PC-9 (cell line): ENCODE measurements at regions of chr22 and their contacts with region 1.

Region 1: GRCh38 chr22:33519071-33519973 is 401.0 kb downstream of the LARGE1 start:
- DNase-seq: peak; percentile 9 to 38
- H3K4me3 ChIP-seq: no peak overlapping the region
- H3K27ac ChIP-seq: no peak overlapping the region
- H3K4me1 ChIP-seq: no peaks in the 10 kb centered on the region
- H3K27me3 ChIP-seq: no peaks in the 10 kb centered on the region
- CTCF ChIP-seq: peak; percentile 78

Region 2: DNA sequence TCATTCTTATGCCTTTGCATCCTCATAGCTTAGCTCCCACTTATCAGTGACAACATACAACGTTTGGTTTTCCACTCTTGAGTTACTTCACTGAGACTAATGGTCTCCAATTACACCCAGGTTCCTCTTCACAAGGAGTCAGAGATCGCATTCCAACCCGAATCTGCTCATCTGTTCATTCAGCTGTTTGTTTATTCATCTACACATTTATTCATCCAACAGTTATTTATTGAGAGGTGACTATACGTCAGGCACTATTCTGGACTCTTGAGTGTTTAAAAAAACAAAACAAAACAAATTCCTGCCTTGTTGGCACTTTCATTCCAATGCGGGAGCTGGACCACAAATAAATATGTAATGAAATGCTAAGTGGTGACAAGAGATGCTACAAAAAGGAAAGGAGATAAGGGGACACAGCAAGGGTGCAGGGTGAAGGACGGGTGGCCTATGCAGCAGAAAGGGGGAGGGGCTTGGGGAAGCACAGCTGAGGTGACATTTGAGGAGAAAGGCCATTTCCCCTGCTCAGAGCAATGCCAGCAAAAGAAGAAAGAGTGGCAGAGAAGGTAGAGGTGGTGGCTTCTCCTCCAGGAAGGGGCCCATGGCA is 67.4 kb before region 1 on chr22:
- CTCF ChIA-PET with region 1: no interaction called
- POLR2A ChIA-PET with region 1: no interaction called
- intact Hi-C with region 1: no loop called
- DNase-seq: no peak
- H3K4me3 ChIP-seq: no peak overlapping the region
- H3K27ac ChIP-seq: no peak overlapping the region
- H3K4me1 ChIP-seq: no peaks in the 10 kb centered on the region
- H3K27me3 ChIP-seq: no peaks in the 10 kb centered on the region
- CTCF ChIP-seq: no peak

Region 3: DNA sequence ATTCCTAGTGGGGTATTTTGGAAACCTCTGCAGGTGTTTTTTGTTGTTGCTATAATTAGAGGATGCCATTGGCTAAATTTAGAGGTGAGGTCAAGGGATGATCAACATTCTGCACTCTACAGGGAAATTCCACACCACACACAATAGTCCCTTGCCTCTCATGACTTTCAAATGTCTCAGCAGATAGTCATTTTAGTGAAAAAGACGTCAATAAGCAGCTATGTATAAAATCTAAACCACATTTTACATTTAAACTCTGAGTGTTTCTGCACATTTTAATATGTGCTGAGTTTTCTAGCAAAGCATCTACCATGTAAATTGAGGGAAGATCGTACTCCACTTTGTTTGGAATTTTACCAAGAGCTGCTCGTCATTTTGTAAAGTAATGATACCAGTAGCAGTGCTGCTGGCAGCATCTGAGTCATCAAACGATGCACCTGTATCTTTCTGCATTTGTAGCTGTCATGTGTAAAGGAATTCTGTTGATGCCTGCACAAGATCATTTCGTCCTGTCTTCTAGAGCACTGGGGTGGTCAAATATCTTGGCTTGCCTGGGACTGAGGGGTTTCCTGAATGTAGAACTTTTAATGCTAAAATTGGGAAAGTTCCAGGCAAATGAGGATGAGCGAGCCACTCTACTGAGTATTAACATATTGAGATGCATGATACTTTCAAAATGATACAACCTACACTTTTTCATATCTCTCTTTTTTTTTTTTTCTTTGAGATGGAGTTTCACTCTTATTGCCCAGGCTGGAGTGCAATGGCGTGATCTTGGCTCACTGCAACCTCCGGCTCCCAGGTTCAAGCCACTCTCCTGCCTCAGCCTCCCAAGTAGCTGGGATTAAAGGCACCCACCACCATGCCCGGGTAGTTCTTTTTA is 46.6 kb before region 1 on chr22:
- CTCF ChIA-PET with region 1: interaction called, 12 read pairs
- POLR2A ChIA-PET with region 1: no interaction called
- intact Hi-C with region 1: no loop called
- DNase-seq: no peak
- H3K4me3 ChIP-seq: no peak overlapping the region
- H3K27ac ChIP-seq: no peak overlapping the region
- H3K4me1 ChIP-seq: peaks cover 9% of the 10 kb centered on the region
- H3K27me3 ChIP-seq: no peaks in the 10 kb centered on the region
- CTCF ChIP-seq: no peak

Region 4: DNA sequence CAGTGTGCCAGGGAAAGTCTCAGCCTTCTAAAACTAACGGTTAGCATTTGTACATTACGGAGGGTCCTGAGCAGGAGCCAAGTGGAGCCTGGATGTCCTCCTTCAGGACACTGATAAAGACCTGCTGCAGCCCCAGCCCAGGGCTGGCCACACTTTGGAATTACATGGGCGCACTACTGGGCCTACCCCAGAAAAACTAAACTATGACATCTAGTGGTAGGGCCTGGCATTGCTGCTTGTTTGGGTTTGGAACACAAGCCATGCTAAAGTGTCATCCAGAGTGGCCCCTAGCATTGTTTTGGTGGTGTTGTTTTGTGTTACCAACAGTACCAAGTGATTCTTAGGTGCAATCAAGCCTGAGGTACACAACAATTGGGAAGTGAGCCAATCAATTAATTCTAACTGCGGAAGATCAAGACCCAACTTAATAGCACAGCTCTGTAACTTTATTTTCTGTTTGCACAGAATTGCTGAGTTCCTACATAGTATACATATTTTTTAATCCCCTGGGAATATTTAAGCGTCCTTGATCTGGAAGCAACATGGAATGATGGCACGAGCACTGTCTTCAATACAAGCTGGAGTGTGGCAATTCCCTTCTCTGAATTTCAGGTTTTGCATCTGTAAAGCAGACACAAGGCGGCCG is 60.2 kb after region 1 on chr22:
- CTCF ChIA-PET with region 1: no interaction called
- POLR2A ChIA-PET with region 1: no interaction called
- intact Hi-C with region 1: loop called (anchors 1 kb)
- DNase-seq: peak in 1 of 2 experiments; percentile 53
- H3K4me3 ChIP-seq: no peak overlapping the region
- H3K27ac ChIP-seq: no peak overlapping the region
- H3K4me1 ChIP-seq: no peaks in the 10 kb centered on the region
- H3K27me3 ChIP-seq: no peaks in the 10 kb centered on the region
- CTCF ChIP-seq: peak; percentile 93

Region 5: DNA sequence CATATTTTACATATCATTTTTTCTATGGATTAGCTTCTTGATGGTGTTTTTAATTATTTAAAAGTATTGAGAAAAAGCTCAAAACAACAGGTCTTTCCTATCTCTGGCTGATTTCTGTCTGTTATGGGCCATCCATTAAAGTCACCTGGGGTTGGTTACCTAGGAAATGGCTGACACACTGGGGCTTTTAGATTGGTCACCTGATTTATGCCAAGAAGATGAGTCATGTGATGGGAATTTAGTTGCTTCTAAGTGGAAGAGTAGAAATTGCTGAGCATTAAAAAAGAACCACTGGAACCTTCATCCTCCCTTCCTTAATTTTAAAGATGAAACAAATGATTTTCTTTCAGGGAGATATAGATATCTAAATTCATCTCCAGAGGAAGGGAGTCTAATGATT is 449.7 kb after region 1 on chr22:
- CTCF ChIA-PET with region 1: interaction called, 14 read pairs
- POLR2A ChIA-PET with region 1: no interaction called
- intact Hi-C with region 1: no loop called
- DNase-seq: no peak
- H3K4me3 ChIP-seq: no peak overlapping the region
- H3K27ac ChIP-seq: no peak overlapping the region
- H3K4me1 ChIP-seq: no peaks in the 10 kb centered on the region
- H3K27me3 ChIP-seq: no peaks in the 10 kb centered on the region
- CTCF ChIP-seq: no peak

Region 6: DNA sequence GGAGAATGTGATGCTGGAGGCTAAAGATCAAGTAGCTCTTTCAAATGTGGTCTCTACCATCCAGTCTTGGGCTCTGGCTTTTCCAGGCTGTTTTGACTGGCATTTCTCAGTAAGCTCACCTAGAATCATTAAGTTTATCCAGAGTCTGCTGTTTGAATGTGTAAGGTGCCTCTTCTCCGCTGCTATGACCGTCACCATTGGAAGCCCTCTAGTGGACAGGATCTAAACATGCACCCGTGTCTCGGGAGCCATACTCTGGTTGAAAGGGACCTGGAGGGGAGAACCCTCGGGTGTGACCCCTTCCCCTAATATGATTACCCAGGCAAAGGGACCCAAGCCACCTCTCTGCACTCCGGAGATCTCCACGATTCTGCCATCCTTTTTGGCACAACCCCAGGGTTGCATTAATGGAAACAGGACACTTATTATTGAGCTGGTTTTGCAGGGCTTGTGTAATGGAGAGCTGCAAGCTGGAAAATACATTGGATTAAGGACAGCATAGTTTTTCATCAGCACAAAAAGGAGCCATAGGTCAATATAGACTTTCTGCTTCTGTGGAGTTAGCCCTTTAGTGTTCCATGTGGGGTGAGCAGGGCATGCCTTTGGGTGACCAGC is 592.0 kb after region 1 on chr22:
- CTCF ChIA-PET with region 1: no interaction called
- POLR2A ChIA-PET with region 1: no interaction called
- intact Hi-C with region 1: loop called (anchors 2 kb)
- DNase-seq: peak in 1 of 2 experiments; percentile 9
- H3K4me3 ChIP-seq: no peak overlapping the region
- H3K27ac ChIP-seq: no peak overlapping the region
- H3K4me1 ChIP-seq: no peaks in the 10 kb centered on the region
- H3K27me3 ChIP-seq: peaks cover 13% of the 10 kb centered on the region; the same call in 1 of the 2 replicates
- CTCF ChIP-seq: peak; percentile 84